Activated naive CD4-positive, alpha-beta T cell treated with anti-CD3 and anti-CD28 coated beads for 36 hours (primary cell): ENCODE measurements at regions of chr5 and their contacts with region 1.

Region 1: DNA sequence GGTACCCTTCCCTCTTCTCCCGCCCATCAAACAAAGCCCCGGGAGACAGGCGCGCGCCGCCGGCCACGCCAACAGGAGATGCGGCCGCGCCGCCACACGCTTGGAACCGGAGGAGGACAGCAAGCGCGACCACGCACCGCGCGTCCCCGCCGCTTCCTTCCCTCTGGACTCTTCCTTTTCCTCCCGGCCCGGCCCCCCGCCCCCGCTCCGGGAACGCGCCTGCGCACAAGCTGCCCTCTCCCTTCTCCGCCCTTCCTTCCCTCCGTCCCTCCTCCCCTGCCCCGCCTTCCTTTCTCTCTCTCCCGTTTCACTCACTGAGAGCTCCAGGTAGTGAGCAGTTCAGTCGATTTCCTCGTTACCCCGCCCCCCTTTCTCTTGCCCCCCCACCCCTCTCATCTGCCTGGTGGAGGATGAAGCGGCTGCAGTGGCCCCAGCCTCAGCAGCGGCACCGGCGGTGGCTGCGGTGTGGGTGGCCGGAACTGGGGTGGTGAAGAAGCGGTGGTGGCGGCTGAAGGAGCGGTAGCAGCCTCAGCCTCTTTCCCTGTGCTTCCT is at the start of gene RASA1:
- DNase-seq: peak; percentile 90
- H3K4me3 Mint-ChIP-seq: peak within 1 kb of the TSS; percentile 100
- H3K27ac Mint-ChIP-seq: peak within 1 kb of the TSS; percentile 96
- H3K4me1 Mint-ChIP-seq: peaks cover 30% of the 10 kb centered on the region
- H3K27me3 Mint-ChIP-seq: no peaks in the 10 kb centered on the region
- total RNA-seq, gene RASA1: 15.4 to 16.2 TPM

Region 2: GRCh38 chr5:86617756-86618576 is 649.7 kb before region 1 on chr5 and contains the start of gene COX7C:
- CTCF ChIA-PET with region 1: no interaction called
- intact Hi-C with region 1: loop called (anchors 2 kb)
- DNase-seq: peak; percentile 96
- H3K4me3 Mint-ChIP-seq: peak within 1 kb of the TSS; percentile 100
- H3K27ac Mint-ChIP-seq: peak within 1 kb of the TSS; percentile 99
- H3K4me1 Mint-ChIP-seq: peaks cover 21% of the 10 kb centered on the region
- H3K27me3 Mint-ChIP-seq: peaks cover 2% of the 10 kb centered on the region
- total RNA-seq, gene COX7C: 925 to 952 TPM

Region 3: GRCh38 chr5:87081511-87082372 is 185.9 kb before region 1 on chr5:
- CTCF ChIA-PET with region 1: no interaction called
- intact Hi-C with region 1: loop called (anchors 5 kb)
- DNase-seq: peak; percentile 47
- H3K4me3 Mint-ChIP-seq: peak overlapping the region; percentile 3
- H3K27ac Mint-ChIP-seq: no peak overlapping the region
- H3K4me1 Mint-ChIP-seq: peaks cover 25% of the 10 kb centered on the region
- H3K27me3 Mint-ChIP-seq: no peaks in the 10 kb centered on the region

Region 4: DNA sequence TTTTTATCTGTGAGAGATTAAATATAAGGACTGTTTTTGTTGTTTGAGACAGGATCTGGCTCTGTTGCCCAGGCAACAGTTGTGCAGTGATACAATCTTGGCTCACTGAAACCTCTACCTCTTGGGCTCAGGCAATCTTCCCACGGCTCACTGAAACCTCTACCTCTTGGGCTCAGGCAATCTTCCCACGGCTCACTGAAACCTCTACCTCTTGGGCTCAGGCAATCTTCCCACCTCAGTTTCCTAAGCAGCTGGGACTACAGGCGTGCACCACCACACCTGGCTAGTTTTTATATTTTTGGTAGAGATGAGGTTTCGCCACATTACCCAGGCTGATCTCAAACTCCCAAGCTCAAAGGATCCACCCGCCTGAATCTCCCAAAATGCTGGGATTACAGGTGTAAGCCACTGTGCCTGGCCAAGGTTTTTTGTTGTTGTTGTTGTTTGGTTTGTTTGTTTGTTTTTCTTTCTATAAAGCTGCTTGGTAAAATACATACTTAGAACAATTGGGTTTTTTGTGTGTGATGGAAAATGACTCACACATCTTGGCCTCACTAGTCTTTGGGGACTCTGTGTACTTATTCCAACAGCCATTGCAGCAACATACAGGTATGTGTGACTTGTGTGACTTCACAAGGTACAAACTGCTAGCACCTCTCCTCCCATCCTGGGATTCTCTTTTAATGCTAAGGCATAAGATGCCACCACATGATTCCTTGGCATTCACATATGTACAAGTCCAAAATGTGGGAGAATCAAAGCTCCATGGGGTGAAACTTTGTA is 36.4 kb before region 1 on chr5:
- CTCF ChIA-PET with region 1: no interaction called
- intact Hi-C with region 1: no loop called
- DNase-seq: no peak
- H3K4me3 Mint-ChIP-seq: no peak overlapping the region
- H3K27ac Mint-ChIP-seq: no peak overlapping the region
- H3K4me1 Mint-ChIP-seq: peaks cover 3% of the 10 kb centered on the region
- H3K27me3 Mint-ChIP-seq: no peaks in the 10 kb centered on the region

Region 5: DNA sequence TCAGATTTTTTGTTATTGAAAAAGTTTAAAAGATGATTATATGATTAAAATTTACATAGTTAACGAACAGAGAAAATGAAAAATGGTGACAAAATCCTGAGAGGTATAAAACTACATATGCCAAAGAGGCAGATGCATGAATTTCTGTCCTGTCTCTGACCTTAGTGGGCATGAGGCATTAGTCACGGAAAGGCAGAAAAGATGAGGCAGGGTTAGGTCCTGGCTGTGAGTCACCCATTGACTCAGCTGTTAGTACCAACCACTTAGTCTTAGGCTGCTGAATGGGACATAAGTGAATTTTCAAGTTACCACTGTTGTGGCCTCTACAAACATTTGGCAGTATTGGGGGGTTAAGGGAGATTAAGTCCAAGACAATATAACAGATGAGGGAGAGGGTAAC is 33.1 kb after region 1 on chr5:
- CTCF ChIA-PET with region 1: interaction called, 3 read pairs
- intact Hi-C with region 1: loop called (anchors 2 kb)
- DNase-seq: peak; percentile 58
- H3K4me3 Mint-ChIP-seq: no peak overlapping the region
- H3K27ac Mint-ChIP-seq: no peak overlapping the region
- H3K4me1 Mint-ChIP-seq: peaks cover 67% of the 10 kb centered on the region
- H3K27me3 Mint-ChIP-seq: no peaks in the 10 kb centered on the region

Region 6: DNA sequence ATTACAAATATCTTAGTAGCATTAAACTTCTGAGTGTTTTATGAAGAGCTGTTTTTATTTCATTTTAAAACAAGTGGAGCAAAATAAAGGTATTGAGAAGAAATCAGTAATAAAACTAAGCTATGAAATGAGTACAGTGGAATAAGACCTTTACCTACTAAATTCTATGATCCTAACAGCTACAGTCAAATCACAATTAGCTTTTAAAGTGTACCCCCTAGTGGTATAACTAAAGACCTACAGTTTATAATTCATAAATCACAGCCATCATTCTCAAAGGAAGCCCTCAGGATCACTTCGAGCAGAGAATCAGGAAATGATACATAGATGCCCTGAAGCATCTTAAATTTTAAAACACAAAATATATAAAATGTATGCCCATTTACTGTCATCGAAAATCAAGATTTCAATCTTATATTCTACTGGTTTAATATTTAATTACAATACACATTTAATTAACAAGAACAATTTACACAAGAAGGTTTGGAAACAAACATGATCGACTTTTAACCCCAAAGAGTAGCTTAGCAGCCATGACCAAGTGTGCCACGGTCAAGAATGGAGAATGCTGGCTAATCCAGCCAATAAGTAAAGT is 132.8 kb after region 1 on chr5:
- CTCF ChIA-PET with region 1: no interaction called
- intact Hi-C with region 1: loop called (anchors 1 kb)
- DNase-seq: no peak
- H3K4me3 Mint-ChIP-seq: no peak overlapping the region
- H3K27ac Mint-ChIP-seq: no peak overlapping the region
- H3K4me1 Mint-ChIP-seq: peaks cover 34% of the 10 kb centered on the region
- H3K27me3 Mint-ChIP-seq: no peaks in the 10 kb centered on the region

Region 7: DNA sequence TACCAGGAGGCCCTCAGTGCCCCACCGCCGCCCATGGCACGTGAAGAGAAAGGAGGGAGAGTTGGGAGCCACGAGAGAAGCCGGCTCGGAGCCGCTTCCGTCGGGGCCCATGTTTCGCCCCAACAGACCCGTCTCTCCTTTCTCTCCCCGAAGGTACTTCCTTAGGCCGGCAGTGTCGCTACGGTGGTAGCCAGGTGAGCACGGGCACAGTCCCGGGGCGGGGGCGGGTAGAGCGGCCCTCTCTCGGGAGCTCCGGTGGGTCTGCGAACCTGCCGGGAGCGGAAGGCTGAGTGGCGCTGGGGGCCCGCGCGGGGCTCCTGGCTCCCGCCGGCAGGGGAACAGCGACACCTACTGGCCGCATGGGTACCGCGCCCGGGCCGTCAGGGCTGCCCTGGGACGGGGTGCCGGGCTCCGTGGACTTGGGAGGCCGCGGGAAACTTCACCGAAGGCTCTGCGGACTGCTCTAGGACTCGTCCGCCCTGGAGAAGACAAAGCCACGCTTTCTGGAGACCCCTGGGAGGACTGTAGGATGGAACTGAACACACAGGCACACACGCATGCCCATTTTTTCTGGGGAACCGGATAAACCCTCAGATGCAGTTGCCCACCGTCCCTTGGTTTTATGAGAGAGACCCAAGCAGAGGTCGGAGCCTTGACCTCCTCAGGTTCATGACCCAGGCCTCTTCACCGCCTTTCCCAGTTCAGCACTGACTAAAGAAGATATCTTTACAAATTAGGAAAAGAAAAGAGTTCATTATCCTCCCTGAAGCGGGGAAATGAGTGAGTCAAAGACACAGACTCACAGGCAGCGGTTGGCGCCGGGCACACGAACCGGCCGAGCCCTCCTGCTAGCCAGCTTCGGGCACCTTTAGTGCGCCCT is 1412.8 kb after region 1 on chr5:
- CTCF ChIA-PET with region 1: no interaction called
- intact Hi-C with region 1: loop called (anchors 10 kb)
- DNase-seq: peak; percentile 77
- H3K4me3 Mint-ChIP-seq: peak overlapping the region; percentile 43
- H3K27ac Mint-ChIP-seq: no peak overlapping the region
- H3K4me1 Mint-ChIP-seq: peaks cover 15% of the 10 kb centered on the region
- H3K27me3 Mint-ChIP-seq: peaks cover 73% of the 10 kb centered on the region